A673 (cell line): ENCODE measurements at regions of chr15 and their contacts with region 1.

Region 1: GRCh38 chr15:36722555-36722954 is 143.1 kb downstream of the CDIN1 start:
- DNase-seq: no peak
- H3K4me3 ChIP-seq: no peak overlapping the region
- H3K27ac ChIP-seq: no peak overlapping the region
- H3K4me1 ChIP-seq: no peaks in the 10 kb centered on the region
- H3K27me3 ChIP-seq: no peaks in the 10 kb centered on the region
- CTCF ChIP-seq: no peak

Region 2: GRCh38 chr15:36579792-36580431 is 142.6 kb before region 1 on chr15:
- CTCF ChIA-PET with region 1: no interaction called
- POLR2A ChIA-PET with region 1: no interaction called
- intact Hi-C with region 1: no loop called
- DNase-seq: no peak
- H3K4me3 ChIP-seq: peak overlapping the region; percentile 66
- H3K27ac ChIP-seq: peak overlapping the region; percentile 82
- H3K4me1 ChIP-seq: no peaks in the 10 kb centered on the region
- H3K27me3 ChIP-seq: no peaks in the 10 kb centered on the region
- CTCF ChIP-seq: no peak

Region 3: GRCh38 chr15:36666228-36666905 is 56.2 kb before region 1 on chr15:
- CTCF ChIA-PET with region 1: no interaction called
- POLR2A ChIA-PET with region 1: no interaction called
- intact Hi-C with region 1: loop called (anchors 10 kb)
- DNase-seq: no peak
- H3K4me3 ChIP-seq: no peak overlapping the region
- H3K27ac ChIP-seq: no peak overlapping the region
- H3K4me1 ChIP-seq: no peaks in the 10 kb centered on the region
- H3K27me3 ChIP-seq: no peaks in the 10 kb centered on the region
- CTCF ChIP-seq: no peak

Region 4: GRCh38 chr15:36798366-36798765 is 75.8 kb after region 1 on chr15:
- CTCF ChIA-PET with region 1: no interaction called
- POLR2A ChIA-PET with region 1: interaction called, 32 read pairs
- intact Hi-C with region 1: no loop called
- DNase-seq: no peak
- H3K4me3 ChIP-seq: no peak overlapping the region
- H3K27ac ChIP-seq: no peak overlapping the region
- H3K4me1 ChIP-seq: no peaks in the 10 kb centered on the region
- H3K27me3 ChIP-seq: no peaks in the 10 kb centered on the region
- CTCF ChIP-seq: no peak

Region 5: DNA sequence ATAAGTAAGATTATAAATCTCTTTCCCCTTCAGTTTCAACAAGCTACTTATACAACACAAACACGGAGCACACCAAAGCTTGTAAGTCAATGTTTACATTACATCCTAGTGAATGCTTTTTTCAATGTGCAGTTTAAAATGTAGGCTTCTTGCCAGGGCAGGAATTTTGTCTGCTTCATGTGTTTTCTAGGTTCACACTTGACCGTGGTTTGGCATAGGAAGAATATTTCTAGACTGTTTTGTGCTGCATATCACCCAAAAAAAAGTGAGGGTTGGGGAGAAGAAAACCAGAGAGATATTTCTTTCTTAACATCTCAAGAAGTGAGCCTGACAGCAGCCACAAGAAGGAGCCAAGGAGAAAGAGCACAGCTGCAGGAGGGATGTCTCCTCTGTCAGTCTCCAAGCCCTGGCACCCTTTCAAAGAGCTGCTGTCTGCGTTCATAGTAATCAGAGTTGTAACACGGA is 122.0 kb after region 1 on chr15:
- CTCF ChIA-PET with region 1: no interaction called
- POLR2A ChIA-PET with region 1: no interaction called
- intact Hi-C with region 1: no loop called
- DNase-seq: no peak
- H3K4me3 ChIP-seq: no peak overlapping the region
- H3K27ac ChIP-seq: no peak overlapping the region
- H3K4me1 ChIP-seq: no peaks in the 10 kb centered on the region
- H3K27me3 ChIP-seq: peaks cover 7% of the 10 kb centered on the region
- CTCF ChIP-seq: no peak

Region 6: GRCh38 chr15:37733628-37734027 is 1011.1 kb after region 1 on chr15:
- CTCF ChIA-PET with region 1: no interaction called
- POLR2A ChIA-PET with region 1: no interaction called
- intact Hi-C with region 1: no loop called
- DNase-seq: peak; percentile 69
- H3K4me3 ChIP-seq: no peak overlapping the region
- H3K27ac ChIP-seq: no peak overlapping the region
- H3K4me1 ChIP-seq: peaks cover 12% of the 10 kb centered on the region
- H3K27me3 ChIP-seq: no peaks in the 10 kb centered on the region
- CTCF ChIP-seq: no peak